ENCODE measurements at regions of chr15 and their contacts with region 1.

Region 1: DNA sequence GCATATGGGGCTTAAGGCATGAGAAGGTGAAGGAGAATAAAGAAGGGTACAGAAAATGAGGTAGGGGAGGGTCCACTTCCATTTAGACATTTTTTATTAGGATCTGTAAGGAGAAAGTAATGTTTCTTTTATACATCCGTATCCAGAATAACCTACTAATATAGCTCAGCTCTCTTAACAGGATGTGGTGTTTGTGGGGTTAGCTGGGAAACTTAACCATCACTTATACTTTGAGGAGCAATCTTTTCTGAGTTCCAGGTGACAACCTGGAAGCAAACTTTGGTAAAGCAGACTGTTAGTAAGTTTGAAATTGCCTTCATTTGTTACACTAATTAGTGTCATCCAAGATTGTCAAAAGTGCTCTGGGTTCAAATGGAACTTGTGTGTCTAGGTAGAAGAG is 36.6 kb downstream of the BUB1B start:
- DNase-seq: peak; percentile 34
- H3K4me3 Mint-ChIP-seq: peak overlapping the region; percentile 24
- H3K27ac Mint-ChIP-seq: peak overlapping the region; percentile 32
- H3K4me1 Mint-ChIP-seq: peaks cover 46% of the 10 kb centered on the region
- H3K27me3 Mint-ChIP-seq: no peaks in the 10 kb centered on the region

Region 2: DNA sequence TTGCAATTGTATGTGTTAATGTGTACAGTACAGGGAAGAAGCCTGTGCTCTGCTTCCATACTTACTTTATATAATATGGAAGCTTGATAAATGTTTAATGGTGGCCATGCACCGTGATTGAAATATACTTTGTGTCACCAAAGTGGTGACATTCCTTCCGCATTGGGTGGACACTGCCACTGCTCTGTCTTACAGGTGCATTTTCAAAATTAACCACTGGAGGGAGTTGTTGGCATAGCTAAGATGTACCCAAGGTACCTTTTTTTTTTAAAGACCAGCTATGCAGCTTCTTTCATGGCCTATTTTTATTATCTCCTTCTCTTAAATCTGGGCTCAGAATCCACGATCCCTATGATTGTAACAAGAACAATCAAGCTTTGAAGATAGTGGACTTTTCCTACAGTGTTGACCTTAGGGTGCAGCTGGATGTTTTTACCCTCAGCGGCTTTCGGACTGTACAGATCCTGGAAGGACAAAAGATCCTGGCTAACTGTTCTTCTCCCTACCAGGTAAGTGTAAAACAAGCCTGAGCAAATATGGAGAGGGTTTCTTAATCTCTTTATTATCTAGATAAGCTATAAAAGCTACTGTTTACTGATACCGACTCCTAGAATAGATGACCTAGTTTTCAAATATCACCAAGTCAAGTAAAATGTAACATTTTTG is 19.9 kb after region 1 on chr15:
- CTCF ChIA-PET with region 1: interaction called, 17 read pairs
- POLR2A ChIA-PET with region 1: no interaction called
- DNase-seq: peak; percentile 68
- H3K4me3 Mint-ChIP-seq: no peak overlapping the region
- H3K27ac Mint-ChIP-seq: no peak overlapping the region
- H3K4me1 Mint-ChIP-seq: no peaks in the 10 kb centered on the region
- H3K27me3 Mint-ChIP-seq: no peaks in the 10 kb centered on the region